ENCODE measurements at regions of chr5 and their contacts with region 1.

Region 1: GRCh38 chr5:124661317-124662141 is 84.9 kb downstream of the ZNF608 start:
- DNase-seq: peak; percentile 86 to 91
- H3K4me3 ChIP-seq: no peak overlapping the region
- H3K4me3 Mint-ChIP-seq: peak overlapping the region; percentile 65
- H3K27ac Mint-ChIP-seq: peak overlapping the region; percentile 96
- H3K4me1 ChIP-seq: peaks cover 76% of the 10 kb centered on the region
- H3K4me1 Mint-ChIP-seq: peaks cover 19% of the 10 kb centered on the region
- H3K27me3 ChIP-seq: no peaks in the 10 kb centered on the region
- H3K27me3 Mint-ChIP-seq: no peaks in the 10 kb centered on the region
- CTCF ChIP-seq: no peak

Region 2: DNA sequence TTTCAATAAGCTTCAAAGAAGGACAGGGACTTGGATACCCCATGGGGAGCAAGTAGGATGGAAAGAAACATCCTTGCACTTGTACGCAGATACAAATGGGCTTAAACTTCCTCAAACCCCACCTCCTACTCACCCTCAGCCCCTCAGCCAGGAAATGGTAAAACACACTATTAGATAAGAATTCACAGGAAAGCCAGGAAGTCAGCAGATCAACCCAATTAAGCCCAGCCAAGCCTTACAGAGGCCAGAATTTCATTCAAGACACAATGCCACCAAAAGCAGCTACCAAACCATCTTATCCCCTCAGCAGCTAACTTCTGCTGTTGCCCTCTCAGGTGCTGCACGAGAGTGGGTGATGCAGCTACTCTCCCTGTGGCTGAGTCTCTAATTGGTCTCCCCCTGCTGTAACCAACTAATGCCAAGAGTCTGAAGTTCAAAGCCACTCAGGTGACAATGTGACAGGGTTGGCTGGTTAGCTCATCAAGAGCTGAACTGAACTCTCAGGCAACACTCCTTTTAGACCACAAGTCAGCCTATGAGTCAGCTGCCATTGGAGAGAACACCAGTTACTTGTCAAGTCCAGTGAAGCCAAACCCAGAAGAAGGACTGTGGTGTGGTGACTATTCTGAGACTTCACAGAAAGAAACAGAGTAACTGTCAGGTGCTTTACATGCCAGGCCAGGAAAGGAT is 117.0 kb before region 1 on chr5:
- CTCF ChIA-PET with region 1: no interaction called
- POLR2A ChIA-PET with region 1: no interaction called
- intact Hi-C with region 1: no loop called
- DNase-seq: no peak
- H3K4me3 ChIP-seq: no peak overlapping the region
- H3K4me3 Mint-ChIP-seq: no peak overlapping the region
- H3K27ac Mint-ChIP-seq: no peak overlapping the region
- H3K4me1 ChIP-seq: no peaks in the 10 kb centered on the region
- H3K4me1 Mint-ChIP-seq: no peaks in the 10 kb centered on the region
- H3K27me3 ChIP-seq: no peaks in the 10 kb centered on the region
- H3K27me3 Mint-ChIP-seq: no peaks in the 10 kb centered on the region
- CTCF ChIP-seq: no peak

Region 3: DNA sequence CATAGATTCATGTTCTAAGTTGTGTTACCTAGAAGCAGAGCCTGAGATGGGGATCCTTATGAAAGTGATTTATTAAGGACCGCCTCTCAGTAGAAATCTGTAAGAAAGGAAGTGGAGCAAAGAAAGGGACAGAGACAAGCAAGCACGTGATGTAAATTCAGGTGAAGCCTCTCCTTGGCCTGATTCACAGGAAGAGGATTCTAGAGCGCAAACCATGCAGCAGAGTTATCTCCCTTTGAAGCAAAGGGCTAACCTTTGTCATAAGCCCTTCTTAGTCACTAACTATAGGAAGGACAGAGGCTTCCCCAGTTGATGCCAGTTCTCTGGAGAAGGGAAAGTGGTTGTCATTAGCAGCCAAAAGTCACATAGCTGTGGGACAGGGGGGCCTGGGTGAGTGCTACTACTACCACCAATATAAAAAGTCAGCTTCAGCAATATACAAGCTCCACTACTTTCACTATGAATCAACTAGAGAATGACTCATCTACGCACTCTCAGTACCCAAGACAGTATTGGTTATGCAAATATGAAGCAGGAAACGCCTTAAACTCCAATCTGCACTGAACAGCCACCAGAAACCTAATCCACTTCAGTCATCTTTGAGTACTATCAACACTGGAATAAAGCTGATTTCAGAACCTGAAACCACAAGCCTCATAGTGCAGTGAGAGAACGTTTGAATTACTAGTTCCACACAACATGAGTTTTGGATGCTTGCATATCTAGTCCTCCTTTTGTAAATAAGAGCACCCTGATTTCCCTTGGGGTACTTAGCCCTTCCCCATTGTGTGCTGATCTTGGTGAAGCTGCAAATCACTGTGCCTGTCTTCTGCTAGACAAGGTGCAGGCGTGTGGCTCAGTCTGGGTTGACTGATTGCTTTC is 77.8 kb before region 1 on chr5:
- CTCF ChIA-PET with region 1: no interaction called
- POLR2A ChIA-PET with region 1: no interaction called
- intact Hi-C with region 1: loop called (anchors 1 kb)
- DNase-seq: no peak
- H3K4me3 ChIP-seq: no peak overlapping the region
- H3K4me3 Mint-ChIP-seq: no peak overlapping the region
- H3K27ac Mint-ChIP-seq: peak overlapping the region; percentile 89
- H3K4me1 ChIP-seq: peaks cover 38% of the 10 kb centered on the region
- H3K4me1 Mint-ChIP-seq: peaks cover 30% of the 10 kb centered on the region
- H3K27me3 ChIP-seq: no peaks in the 10 kb centered on the region
- H3K27me3 Mint-ChIP-seq: no peaks in the 10 kb centered on the region
- CTCF ChIP-seq: no peak

Region 4: DNA sequence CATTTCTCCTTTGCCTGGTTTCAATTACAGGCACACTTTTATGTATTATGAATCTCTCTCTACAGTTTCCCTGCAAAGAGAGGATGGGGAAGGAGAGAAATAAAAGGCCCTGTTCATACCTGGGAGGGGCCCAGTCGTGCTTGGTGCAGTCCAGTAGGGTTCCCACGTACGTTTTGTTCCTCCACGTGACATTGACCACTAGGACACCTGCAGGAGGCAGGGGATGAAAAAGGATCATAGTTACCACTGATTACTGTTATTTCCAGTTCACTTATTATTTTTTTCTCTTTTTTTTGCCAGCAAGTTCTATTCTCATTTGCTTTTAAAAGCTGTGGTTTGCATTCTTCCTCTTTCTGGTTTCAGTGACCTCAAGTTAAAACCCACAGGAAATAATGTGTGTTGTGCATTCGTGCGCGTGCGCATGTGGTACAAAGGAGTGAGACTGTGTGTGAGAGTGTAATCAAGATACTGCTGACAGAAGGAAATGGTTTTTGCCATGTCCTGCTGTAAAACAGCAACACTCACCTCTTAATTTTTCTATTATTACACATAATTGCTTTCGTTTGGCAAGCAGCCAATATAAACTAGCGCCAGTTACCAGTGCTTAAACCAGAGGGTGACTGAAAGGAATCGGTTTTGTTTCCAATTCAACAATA is 11.9 kb before region 1 on chr5:
- CTCF ChIA-PET with region 1: no interaction called
- POLR2A ChIA-PET with region 1: no interaction called
- intact Hi-C with region 1: loop called (anchors 1 kb)
- DNase-seq: no peak
- H3K4me3 ChIP-seq: no peak overlapping the region
- H3K4me3 Mint-ChIP-seq: no peak overlapping the region
- H3K27ac Mint-ChIP-seq: no peak overlapping the region
- H3K4me1 ChIP-seq: peaks cover 33% of the 10 kb centered on the region
- H3K4me1 Mint-ChIP-seq: peaks cover 9% of the 10 kb centered on the region
- H3K27me3 ChIP-seq: no peaks in the 10 kb centered on the region
- H3K27me3 Mint-ChIP-seq: no peaks in the 10 kb centered on the region
- CTCF ChIP-seq: no peak

Region 5: GRCh38 chr5:124702525-124702924 is 41.0 kb after region 1 on chr5:
- CTCF ChIA-PET with region 1: no interaction called
- POLR2A ChIA-PET with region 1: no interaction called
- intact Hi-C with region 1: loop called (anchors 2 kb)
- DNase-seq: no peak
- H3K4me3 ChIP-seq: no peak overlapping the region
- H3K4me3 Mint-ChIP-seq: no peak overlapping the region
- H3K27ac Mint-ChIP-seq: peak overlapping the region; percentile 36
- H3K4me1 ChIP-seq: peaks cover 80% of the 10 kb centered on the region
- H3K4me1 Mint-ChIP-seq: peaks cover 54% of the 10 kb centered on the region
- H3K27me3 ChIP-seq: no peaks in the 10 kb centered on the region
- H3K27me3 Mint-ChIP-seq: no peaks in the 10 kb centered on the region
- CTCF ChIP-seq: no peak

Region 6: DNA sequence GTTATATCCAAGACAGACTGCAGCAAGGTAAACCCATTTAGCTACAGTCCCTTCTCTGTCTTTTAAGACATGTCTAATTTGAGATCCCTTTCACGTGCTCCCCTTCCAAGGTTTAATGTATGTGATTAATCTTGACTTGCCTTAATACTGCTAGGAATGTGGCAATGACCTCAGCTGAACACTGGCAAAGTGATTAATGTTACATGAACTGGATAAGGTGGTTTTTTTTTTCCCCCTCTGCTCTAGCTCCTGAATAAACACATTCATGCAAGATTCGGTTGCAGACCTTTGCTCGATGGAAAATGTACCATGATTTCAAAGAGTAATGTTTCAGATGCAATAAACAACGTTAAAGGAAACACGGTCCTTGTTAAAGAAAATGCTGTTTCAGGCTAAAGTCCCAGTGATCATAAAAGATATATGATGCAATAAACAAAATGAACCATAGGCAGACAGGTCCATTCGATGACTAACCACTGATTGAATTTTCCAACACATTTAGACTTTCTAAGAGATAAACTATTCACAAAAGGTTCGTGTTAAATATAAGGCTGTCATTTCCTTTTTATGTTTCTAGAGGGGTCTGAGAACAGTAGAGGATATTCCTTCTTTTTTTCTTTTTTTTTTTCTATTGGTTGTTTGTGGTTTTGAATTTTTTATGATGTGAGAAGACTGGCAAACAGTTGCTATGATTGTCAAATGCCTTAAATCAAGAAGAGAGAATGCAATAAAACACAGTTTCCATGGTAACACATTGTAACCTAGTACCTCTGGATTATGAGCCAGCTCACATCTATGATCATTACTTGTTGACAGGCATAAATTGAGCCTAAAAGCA is 129.6 kb after region 1 on chr5:
- CTCF ChIA-PET with region 1: no interaction called
- POLR2A ChIA-PET with region 1: no interaction called
- intact Hi-C with region 1: no loop called
- DNase-seq: no peak
- H3K4me3 ChIP-seq: no peak overlapping the region
- H3K4me3 Mint-ChIP-seq: no peak overlapping the region
- H3K27ac Mint-ChIP-seq: no peak overlapping the region
- H3K4me1 ChIP-seq: peaks cover 31% of the 10 kb centered on the region
- H3K4me1 Mint-ChIP-seq: peaks cover 11% of the 10 kb centered on the region
- H3K27me3 ChIP-seq: no peaks in the 10 kb centered on the region
- H3K27me3 Mint-ChIP-seq: no peaks in the 10 kb centered on the region
- CTCF ChIP-seq: no peak

Region 7: DNA sequence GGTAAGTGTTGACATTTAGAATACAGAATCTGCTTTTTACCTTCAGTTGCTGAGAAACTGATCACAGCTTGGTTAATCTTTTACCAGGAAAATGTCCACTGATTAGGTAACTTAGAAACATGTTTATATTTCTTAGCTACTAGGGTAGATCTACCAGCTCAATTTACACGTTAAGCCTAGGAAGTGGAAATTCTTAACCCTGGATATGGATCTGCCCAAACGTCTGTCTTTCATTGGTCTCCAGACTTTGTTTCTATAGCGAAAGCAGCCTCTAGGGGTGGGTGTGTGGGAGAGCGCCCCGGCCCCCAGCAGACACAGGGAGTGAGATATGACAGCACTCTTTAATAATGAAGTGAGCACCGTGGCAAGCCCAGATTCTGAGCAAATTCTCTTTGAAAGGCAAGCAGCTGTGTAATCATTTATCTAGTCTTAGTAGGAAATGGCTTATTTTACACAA is 226.5 kb after region 1 on chr5:
- CTCF ChIA-PET with region 1: no interaction called
- POLR2A ChIA-PET with region 1: no interaction called
- intact Hi-C with region 1: loop called (anchors 5 kb)
- DNase-seq: peak; percentile 65 to 75
- H3K4me3 ChIP-seq: no peak overlapping the region
- H3K4me3 Mint-ChIP-seq: peak overlapping the region; percentile 66
- H3K27ac Mint-ChIP-seq: peak overlapping the region; percentile 75
- H3K4me1 ChIP-seq: peaks cover 23% of the 10 kb centered on the region
- H3K4me1 Mint-ChIP-seq: peaks cover 9% of the 10 kb centered on the region
- H3K27me3 ChIP-seq: no peaks in the 10 kb centered on the region
- H3K27me3 Mint-ChIP-seq: no peaks in the 10 kb centered on the region
- CTCF ChIP-seq: peak; percentile 35 to 69

Region 8: GRCh38 chr5:125011014-125011413 is 349.5 kb after region 1 on chr5:
- CTCF ChIA-PET with region 1: no interaction called
- POLR2A ChIA-PET with region 1: interaction called, 4 read pairs
- intact Hi-C with region 1: loop called (anchors 5 kb)
- DNase-seq: no peak
- H3K4me3 ChIP-seq: no peak overlapping the region
- H3K4me3 Mint-ChIP-seq: peak overlapping the region; percentile 36
- H3K27ac Mint-ChIP-seq: peak overlapping the region; percentile 83
- H3K4me1 ChIP-seq: peaks cover 60% of the 10 kb centered on the region
- H3K4me1 Mint-ChIP-seq: peaks cover 20% of the 10 kb centered on the region
- H3K27me3 ChIP-seq: no peaks in the 10 kb centered on the region
- H3K27me3 Mint-ChIP-seq: no peaks in the 10 kb centered on the region
- CTCF ChIP-seq: peak in 1 of 2 experiments; percentile 4